CD8-positive, alpha-beta T cell (primary cell): ENCODE measurements at regions of chr2 and their contacts with region 1.

Region 1: GRCh38 chr2:150255528-150255927 is 231.9 kb downstream of the RND3 start:
- DNase-seq: no peak
- ATAC-seq: no peak
- H3K4me3 ChIP-seq: no peak overlapping the region
- H3K4me3 Mint-ChIP-seq: no peak overlapping the region
- H3K27ac ChIP-seq: no peak overlapping the region
- H3K27ac Mint-ChIP-seq: no peak overlapping the region
- H3K4me1 ChIP-seq: no peaks in the 10 kb centered on the region
- H3K4me1 Mint-ChIP-seq: no peaks in the 10 kb centered on the region
- H3K27me3 ChIP-seq: no peaks in the 10 kb centered on the region
- H3K27me3 Mint-ChIP-seq: no peaks in the 10 kb centered on the region
- CTCF ChIP-seq: no peak

Region 2: GRCh38 chr2:149972066-149972465 is 283.5 kb before region 1 on chr2:
- CTCF ChIA-PET with region 1: no interaction called
- POLR2A ChIA-PET with region 1: no interaction called
- intact Hi-C with region 1: loop called in 1 of 2 experiments (anchors 5 kb)
- DNase-seq: no peak
- ATAC-seq: no peak
- H3K4me3 ChIP-seq: no peak overlapping the region
- H3K4me3 Mint-ChIP-seq: no peak overlapping the region
- H3K27ac ChIP-seq: no peak overlapping the region
- H3K27ac Mint-ChIP-seq: no peak overlapping the region
- H3K4me1 ChIP-seq: no peaks in the 10 kb centered on the region
- H3K4me1 Mint-ChIP-seq: no peaks in the 10 kb centered on the region
- H3K27me3 ChIP-seq: no peaks in the 10 kb centered on the region
- H3K27me3 Mint-ChIP-seq: no peaks in the 10 kb centered on the region
- CTCF ChIP-seq: no peak

Region 3: DNA sequence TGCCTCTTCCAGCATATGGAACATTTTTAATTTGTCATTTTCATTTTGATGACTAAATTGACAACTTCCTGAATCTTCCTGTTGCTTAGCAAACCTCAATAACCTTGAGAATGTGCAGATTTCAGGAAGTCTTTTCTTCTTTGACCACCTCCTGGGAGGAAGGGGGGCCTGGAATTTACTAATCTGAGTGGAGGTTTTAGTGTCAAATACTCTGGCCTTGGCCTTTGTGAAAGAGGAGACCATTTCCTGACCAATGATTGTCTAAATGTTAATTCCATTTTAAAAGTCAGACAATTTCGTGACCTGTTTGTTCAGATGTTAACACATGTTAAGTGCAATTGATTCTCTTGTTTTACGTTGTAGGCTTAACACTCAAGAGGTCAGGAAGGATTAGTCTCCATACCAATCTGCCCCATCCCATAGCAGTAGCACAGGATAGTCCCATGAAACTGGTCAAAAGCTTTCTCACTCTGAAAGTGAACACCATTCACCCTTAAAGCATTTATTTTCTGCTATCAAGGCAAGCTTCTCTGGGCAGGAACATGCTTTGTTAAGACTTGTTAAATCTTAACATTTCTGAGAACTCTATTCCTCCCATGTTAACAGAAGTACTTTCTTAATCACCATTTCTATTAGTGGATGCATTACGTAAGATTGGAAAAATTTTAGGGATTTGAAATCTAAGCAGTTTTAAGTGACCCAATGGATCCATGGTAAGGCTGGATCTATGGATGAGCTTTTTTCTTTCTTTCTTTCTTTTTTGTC is 12.3 kb after region 1 on chr2:
- CTCF ChIA-PET with region 1: no interaction called
- POLR2A ChIA-PET with region 1: no interaction called
- intact Hi-C with region 1: no loop called
- DNase-seq: no peak
- ATAC-seq: no peak
- H3K4me3 ChIP-seq: no peak overlapping the region
- H3K4me3 Mint-ChIP-seq: no peak overlapping the region
- H3K27ac ChIP-seq: no peak overlapping the region
- H3K27ac Mint-ChIP-seq: no peak overlapping the region
- H3K4me1 ChIP-seq: no peaks in the 10 kb centered on the region
- H3K4me1 Mint-ChIP-seq: no peaks in the 10 kb centered on the region
- H3K27me3 ChIP-seq: no peaks in the 10 kb centered on the region
- H3K27me3 Mint-ChIP-seq: no peaks in the 10 kb centered on the region
- CTCF ChIP-seq: no peak

Region 4: DNA sequence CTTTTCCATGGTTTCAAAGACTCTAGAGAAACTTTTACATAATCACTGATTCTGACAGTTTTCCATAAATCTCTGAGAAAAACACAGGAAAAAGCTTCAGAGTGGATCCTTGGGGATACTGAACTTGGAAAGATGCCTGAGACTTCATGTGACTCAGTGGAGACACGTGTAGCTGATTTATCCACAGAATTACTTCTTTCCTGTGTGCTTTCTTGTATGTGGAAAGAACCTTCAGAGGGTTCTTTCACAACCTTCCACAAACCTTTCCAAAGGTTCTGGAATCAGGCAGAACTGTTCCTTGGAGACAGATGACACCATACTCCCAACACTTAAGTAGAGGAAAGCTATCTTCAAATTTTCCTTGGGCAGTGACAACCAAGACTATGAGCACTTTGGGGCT is 24.7 kb after region 1 on chr2:
- CTCF ChIA-PET with region 1: no interaction called
- POLR2A ChIA-PET with region 1: no interaction called
- intact Hi-C with region 1: no loop called
- DNase-seq: no peak
- ATAC-seq: no peak
- H3K4me3 ChIP-seq: no peak overlapping the region
- H3K4me3 Mint-ChIP-seq: no peak overlapping the region
- H3K27ac ChIP-seq: no peak overlapping the region
- H3K27ac Mint-ChIP-seq: no peak overlapping the region
- H3K4me1 ChIP-seq: no peaks in the 10 kb centered on the region
- H3K4me1 Mint-ChIP-seq: no peaks in the 10 kb centered on the region
- H3K27me3 ChIP-seq: no peaks in the 10 kb centered on the region
- H3K27me3 Mint-ChIP-seq: no peaks in the 10 kb centered on the region
- CTCF ChIP-seq: no peak

Region 5: DNA sequence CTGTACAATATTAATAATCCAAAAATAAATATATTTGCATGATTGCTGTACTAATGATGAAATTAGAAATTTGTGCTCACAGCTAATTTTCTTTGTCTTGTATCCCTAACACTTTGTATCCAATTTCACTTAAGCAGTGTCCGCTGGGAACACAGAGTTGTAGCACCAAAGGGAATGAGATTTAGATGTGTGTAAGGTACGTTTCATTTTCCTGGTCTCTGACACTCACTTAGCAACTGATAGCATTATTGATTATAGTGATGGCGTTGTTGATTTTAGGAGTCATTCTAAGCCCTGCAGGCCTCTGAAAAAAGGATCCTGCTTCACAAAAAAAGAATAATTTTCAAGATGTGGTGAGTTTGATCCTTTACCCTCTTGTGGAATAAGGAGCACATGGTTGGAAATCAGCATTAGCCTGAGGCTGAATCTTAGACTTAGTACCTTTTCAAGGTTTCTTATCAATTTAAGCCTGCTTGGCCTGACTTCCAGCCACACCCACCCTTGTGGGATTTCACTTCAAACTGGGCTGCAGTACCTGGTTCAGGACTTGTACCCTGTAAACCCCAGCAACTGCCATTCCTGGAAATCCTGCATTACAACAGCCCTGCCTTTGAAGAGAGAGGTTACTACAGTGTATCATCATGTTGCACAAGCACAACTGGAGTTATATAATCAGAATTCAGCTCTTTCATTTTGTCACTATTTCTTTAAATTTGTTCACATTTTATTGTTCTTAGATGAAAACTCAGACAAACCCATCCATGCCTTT is 115.7 kb after region 1 on chr2:
- CTCF ChIA-PET with region 1: no interaction called
- POLR2A ChIA-PET with region 1: no interaction called
- intact Hi-C with region 1: no loop called
- DNase-seq: no peak
- ATAC-seq: no peak
- H3K4me3 ChIP-seq: no peak overlapping the region
- H3K4me3 Mint-ChIP-seq: no peak overlapping the region
- H3K27ac ChIP-seq: no peak overlapping the region
- H3K27ac Mint-ChIP-seq: no peak overlapping the region
- H3K4me1 ChIP-seq: no peaks in the 10 kb centered on the region
- H3K4me1 Mint-ChIP-seq: no peaks in the 10 kb centered on the region
- H3K27me3 ChIP-seq: no peaks in the 10 kb centered on the region
- H3K27me3 Mint-ChIP-seq: no peaks in the 10 kb centered on the region
- CTCF ChIP-seq: no peak